ENCODE measurements at regions of chr22 and their contacts with region 1.

Region 1: DNA sequence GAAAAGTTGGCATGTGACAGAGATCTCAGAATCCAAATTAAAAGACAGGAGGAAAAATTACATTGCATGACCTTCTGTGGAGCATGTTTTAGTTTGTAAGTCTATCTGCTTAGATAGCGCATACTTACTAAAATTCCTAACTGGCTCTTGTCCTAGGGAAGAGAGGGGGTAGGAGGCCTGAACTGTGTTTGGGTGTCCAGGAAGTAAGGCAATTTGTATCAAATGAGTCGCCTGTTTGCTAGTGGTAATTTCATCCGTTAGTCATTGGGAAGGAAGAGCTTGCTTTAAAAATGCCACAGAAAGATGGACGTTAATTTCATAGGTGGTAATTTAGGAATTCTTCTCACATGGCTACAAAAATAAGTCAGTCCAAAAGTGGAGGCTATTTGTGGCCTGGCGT is 18.5 kb downstream of the GRK3 start:
- DNase-seq: no peak

Region 2: GRCh38 chr22:25282671-25283561 is 300.0 kb before region 1 on chr22:
- intact Hi-C with region 1: loop called (anchors 10 kb)
- DNase-seq: peak in 1 of 10 donors; percentile 73

Region 3: DNA sequence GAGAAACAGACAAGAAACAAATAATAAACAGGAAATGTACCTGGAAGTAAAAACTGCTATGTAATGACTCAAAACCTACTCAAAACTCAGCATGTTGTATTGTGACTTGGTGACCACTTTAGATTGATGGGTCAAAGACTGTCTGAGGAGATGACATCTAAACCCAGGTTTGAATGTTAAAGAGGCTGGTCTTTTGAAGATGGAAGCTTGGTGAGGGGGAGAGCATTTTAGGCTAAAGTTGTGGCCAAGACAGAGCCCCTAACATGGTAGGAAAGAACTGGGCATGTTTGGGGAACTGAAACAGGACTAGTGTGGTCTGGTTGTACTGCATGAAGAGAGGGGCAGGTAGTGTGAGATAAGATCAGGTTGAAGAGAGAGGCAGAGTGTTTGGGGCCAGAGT is 73.8 kb after region 1 on chr22:
- intact Hi-C with region 1: no loop called
- DNase-seq: no peak